BJ (cell line): ENCODE measurements at regions of chr10 and their contacts with region 1.

Region 1: DNA sequence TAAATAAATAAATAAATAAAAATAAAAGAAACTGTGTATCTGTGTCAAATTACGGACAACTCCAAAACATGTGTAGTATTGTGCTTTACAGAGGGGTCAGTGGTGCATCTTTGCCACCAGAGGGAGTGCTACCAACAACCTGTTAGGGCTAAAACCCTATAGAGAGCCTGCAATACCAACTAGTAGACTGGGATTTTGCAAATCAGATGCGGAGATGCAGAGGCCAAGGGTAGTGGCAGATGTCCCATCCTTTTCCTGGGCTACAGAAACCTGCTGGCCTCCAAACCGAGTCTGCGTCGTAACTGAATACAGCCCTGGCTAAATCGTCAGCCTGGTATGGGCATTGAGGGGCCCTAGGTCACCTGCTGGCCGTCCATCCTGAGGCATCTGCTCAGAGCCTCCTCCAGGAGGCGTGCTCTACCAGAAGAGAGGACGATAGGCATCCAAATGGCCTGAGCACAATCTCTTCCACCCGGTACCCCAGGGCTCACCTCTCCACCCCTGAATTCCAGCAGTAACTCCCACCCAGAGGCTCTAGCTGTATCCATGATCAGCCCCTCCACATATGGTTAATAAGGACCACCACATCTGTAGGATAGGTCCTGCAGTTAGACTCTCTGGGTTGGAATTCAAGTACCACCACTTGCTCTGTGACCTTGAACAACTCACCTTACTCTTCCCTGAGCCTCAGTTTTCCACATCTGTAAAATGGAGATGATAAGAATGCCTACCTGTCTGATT is 6.2 kb upstream of the RRP12 start:
- DNase-seq: no peak
- H3K4me3 ChIP-seq: no peak overlapping the region
- H3K27me3 ChIP-seq: no peaks in the 10 kb centered on the region
- CTCF ChIP-seq: peak; percentile 77

Region 2: DNA sequence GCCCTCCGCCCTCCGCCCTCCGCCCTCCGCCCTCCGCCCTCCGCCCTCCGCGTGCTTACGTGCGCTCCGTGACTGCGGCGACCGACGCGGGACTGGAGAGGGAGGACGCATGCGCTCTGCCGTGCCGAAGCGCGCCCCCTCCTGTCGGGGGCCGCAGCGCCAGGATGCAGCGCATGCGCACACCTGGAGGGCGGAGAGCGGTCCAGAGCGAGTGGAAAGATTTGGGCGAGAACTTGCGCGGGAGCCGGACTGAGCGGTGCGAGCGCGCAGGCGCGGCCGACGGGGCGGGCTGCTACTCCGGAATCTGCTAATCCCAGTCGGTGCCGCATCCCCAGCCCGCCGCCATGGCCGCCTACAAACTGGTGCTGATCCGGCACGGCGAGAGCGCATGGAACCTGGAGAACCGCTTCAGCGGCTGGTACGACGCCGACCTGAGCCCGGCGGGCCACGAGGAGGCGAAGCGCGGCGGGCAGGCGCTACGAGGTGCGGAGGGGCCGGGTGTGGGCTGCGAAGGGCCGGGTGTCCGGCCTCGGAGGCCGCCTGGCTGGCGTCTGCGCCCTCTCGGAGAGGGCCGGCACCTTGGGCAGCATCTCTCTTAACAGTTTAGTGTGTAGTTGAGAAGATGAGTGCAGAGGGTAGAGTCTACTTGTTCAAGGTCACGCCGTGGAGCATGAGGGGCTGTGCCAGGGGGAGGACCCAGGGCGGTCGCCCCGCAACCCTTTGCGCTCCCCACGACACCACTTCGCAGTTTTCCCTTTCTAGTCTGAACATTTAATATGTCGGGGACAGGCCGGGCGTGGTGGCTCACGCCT is 18.8 kb after region 1 on chr10 and contains the start of gene PGAM1:
- CTCF ChIA-PET with region 1: interaction called, 62 read pairs
- POLR2A ChIA-PET with region 1: no interaction called
- DNase-seq: peak; percentile 84
- H3K4me3 ChIP-seq: peak within 1 kb of the TSS; percentile 90
- H3K27me3 ChIP-seq: no peaks in the 10 kb centered on the region
- CTCF ChIP-seq: peak; percentile 81
- polyA plus RNA-seq, gene PGAM1: 528 and 710 TPM in 2 replicates

Region 3: DNA sequence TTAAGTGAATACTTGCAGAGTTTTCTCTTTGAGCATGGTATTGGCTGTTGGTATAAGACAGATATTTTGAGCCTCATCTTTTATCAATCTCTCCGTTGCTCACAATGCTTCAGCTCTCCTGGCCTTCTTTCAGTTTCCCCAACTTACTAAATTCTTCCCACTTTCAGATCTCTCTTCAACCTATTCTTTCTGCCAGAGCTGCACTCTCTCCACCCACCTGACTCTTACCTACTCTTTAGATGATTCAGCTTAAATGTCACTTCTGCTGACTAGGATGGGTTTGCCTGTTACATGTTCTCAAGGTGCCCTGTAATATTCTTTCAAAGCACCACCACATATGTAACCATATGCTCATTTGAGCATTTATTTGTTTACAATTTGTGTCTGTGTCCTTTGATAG is 36.8 kb after region 1 on chr10:
- CTCF ChIA-PET with region 1: interaction called, 12 read pairs
- POLR2A ChIA-PET with region 1: no interaction called
- DNase-seq: no peak
- H3K4me3 ChIP-seq: no peak overlapping the region
- H3K27me3 ChIP-seq: no peaks in the 10 kb centered on the region
- CTCF ChIP-seq: no peak

Region 4: GRCh38 chr10:97475936-97476594 is 68.7 kb after region 1 on chr10:
- CTCF ChIA-PET with region 1: no interaction called
- POLR2A ChIA-PET with region 1: no interaction called
- DNase-seq: peak; percentile 55
- H3K4me3 ChIP-seq: no peak overlapping the region
- H3K27me3 ChIP-seq: no peaks in the 10 kb centered on the region
- CTCF ChIP-seq: no peak